PC-9 (cell line): ENCODE measurements at regions of chr20 and their contacts with region 1.

Region 1: DNA sequence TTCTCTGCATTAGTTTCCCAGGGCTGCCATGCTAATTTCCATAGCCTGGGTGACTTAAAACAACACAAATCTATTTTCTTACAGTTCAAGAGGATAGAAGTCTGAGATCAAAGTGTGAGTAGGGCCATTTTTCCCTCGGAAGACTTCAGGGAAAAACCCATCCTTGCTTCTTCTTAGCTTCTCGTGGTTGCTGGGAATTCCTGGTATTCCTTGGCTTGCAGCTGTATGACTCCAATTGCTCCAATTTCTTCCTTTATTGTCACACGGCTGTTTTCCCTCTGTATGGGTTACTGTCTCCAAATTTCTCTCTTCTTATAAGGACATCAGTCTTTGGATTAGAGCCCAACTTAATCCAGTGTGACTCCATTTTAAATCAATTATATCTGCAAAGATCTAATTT is 128.4 kb upstream of the JAG1 start:
- DNase-seq: no peak
- H3K4me3 ChIP-seq: no peak overlapping the region
- H3K27ac ChIP-seq: no peak overlapping the region
- H3K4me1 ChIP-seq: no peaks in the 10 kb centered on the region
- H3K27me3 ChIP-seq: no peaks in the 10 kb centered on the region
- CTCF ChIP-seq: no peak

Region 2: GRCh38 chr20:10659651-10660601 is 142.3 kb before region 1 on chr20:
- CTCF ChIA-PET with region 1: interaction called, 15 read pairs
- POLR2A ChIA-PET with region 1: no interaction called
- intact Hi-C with region 1: no loop called
- DNase-seq: no peak
- H3K4me3 ChIP-seq: no peak overlapping the region
- H3K27ac ChIP-seq: no peak overlapping the region
- H3K4me1 ChIP-seq: no peaks in the 10 kb centered on the region
- H3K27me3 ChIP-seq: no peaks in the 10 kb centered on the region
- CTCF ChIP-seq: no peak

Region 3: GRCh38 chr20:10747019-10747418 is 55.2 kb before region 1 on chr20:
- CTCF ChIA-PET with region 1: no interaction called
- POLR2A ChIA-PET with region 1: no interaction called
- intact Hi-C with region 1: loop called (anchors 10 kb)
- DNase-seq: no peak
- H3K4me3 ChIP-seq: no peak overlapping the region
- H3K27ac ChIP-seq: no peak overlapping the region
- H3K4me1 ChIP-seq: 0 out of 2 replicates have a peak, but pooled peaks cover 7% of the 10 kb centered on the region
- H3K27me3 ChIP-seq: no peaks in the 10 kb centered on the region
- CTCF ChIP-seq: no peak